Lower leg skin (tissue), 4 donors: ENCODE measurements at regions of chr3 and their contacts with region 1.

Region 1: GRCh38 chr3:40043444-40043755 is 234.0 kb downstream of the MYRIP start:
- DNase-seq: no peak
- H3K4me3 ChIP-seq: no peak overlapping the region
- CTCF ChIP-seq: no peak
- POLR2A ChIP-seq: no peak

Region 2: GRCh38 chr3:40083066-40083465 is 39.7 kb after region 1 on chr3:
- intact Hi-C with region 1: loop called (anchors 2 kb)
- DNase-seq: no peak
- H3K4me3 ChIP-seq: no peak overlapping the region
- CTCF ChIP-seq: no peak
- POLR2A ChIP-seq: no peak

Region 3: GRCh38 chr3:40109641-40110490 is 66.5 kb after region 1 on chr3:
- intact Hi-C with region 1: no loop called
- DNase-seq: no peak
- H3K4me3 ChIP-seq: no peak overlapping the region
- CTCF ChIP-seq: no peak
- POLR2A ChIP-seq: no peak